GM13976 (cell line): ENCODE measurements at regions of chr4 and their contacts with region 1.

Region 1: GRCh38 chr4:165537028-165537648 is 158.3 kb downstream of the CPE start:
- DNase-seq: peak; percentile 41
- CTCF ChIP-seq: peak; percentile 31

Region 2: DNA sequence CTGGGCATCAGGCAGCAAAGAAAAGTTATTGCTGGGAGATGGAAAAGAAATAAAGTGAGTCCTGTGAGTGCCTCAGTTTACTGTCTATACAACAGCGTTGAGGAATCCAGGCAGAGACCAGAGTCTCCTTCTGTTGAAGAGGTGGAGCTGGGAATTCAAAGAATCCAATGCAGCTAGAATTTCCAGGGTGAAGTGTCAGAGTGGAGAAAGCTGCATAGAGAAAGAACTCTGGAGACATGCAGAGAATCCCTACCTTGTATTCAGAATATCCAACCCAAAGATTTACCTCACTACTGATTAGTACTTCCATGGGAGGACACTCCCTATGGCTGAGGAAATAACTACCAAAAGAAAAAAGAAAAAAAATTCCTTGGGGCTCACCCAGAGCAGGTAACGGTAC is 356.2 kb after region 1 on chr4:
- in situ Hi-C with region 1: no loop called
- DNase-seq: no peak
- CTCF ChIP-seq: no peak

Region 3: DNA sequence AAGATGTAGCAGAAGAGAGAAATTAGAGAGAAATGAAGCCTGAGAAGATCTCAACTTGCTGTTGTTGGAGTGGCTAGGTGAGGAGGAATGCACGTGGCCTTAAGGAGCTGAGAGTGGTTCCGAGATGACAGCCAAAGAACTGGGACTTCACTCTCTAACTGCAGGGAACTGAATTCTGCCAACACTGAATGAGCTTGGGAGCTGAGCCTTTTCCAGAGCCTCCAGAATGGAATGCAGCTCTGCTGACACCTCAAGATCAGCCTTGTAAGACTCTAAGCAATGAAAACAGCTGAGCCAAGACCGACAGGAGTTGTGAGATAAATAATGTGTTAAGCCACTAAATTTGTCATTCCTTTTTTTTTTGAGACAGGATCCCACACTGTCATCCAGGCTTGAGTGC is 408.9 kb after region 1 on chr4:
- in situ Hi-C with region 1: no loop called
- DNase-seq: no peak
- CTCF ChIP-seq: no peak

Region 4: DNA sequence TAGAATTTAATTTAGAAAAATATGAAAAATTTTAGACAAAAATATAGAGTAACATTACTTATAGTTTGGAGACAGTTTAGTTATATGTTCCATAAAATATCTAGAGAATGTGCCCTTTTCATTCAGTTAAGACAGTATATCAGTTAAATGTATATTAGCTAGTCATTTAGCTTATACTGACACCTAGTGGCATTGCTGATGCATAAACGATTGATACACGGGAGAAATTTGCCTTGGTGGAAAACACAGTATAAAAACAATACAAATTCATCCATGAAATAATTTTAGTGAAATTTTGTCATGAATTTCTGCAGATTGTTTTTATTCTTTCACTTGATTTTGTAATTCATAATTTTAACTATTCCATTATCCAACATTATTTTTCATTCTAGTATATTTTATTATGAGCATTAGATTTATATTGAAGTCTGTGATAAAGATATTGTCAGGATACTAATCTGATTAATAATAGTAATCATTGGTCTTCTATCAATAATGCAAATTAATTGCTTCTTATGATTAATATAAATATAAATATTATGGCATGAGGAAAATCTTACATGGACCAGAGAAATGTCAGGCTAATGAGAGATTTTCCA is 554.9 kb after region 1 on chr4:
- in situ Hi-C with region 1: loop called (anchors 25 kb)
- DNase-seq: peak; percentile 3
- CTCF ChIP-seq: peak; percentile 31